Ascending aorta (tissue), 2 donors: ENCODE measurements at regions of chr1 and their contacts with region 1.

Region 1: GRCh38 chr1:42335050-42335808 is at the start of gene FOXJ3:
- DNase-seq: peak; percentile 43 to 93
- H3K4me3 ChIP-seq: peak within 1 kb of the TSS; percentile 95 to 99
- H3K27ac ChIP-seq: peak within 1 kb of the TSS; percentile 88 to 91
- H3K4me1 ChIP-seq: peaks cover 0 to 11% of the 10 kb centered on the region in 2 donors
- H3K27me3 ChIP-seq: no peaks in the 10 kb centered on the region
- CTCF ChIP-seq: no peak
- total RNA-seq, gene FOXJ3: 62.8 TPM

Region 2: DNA sequence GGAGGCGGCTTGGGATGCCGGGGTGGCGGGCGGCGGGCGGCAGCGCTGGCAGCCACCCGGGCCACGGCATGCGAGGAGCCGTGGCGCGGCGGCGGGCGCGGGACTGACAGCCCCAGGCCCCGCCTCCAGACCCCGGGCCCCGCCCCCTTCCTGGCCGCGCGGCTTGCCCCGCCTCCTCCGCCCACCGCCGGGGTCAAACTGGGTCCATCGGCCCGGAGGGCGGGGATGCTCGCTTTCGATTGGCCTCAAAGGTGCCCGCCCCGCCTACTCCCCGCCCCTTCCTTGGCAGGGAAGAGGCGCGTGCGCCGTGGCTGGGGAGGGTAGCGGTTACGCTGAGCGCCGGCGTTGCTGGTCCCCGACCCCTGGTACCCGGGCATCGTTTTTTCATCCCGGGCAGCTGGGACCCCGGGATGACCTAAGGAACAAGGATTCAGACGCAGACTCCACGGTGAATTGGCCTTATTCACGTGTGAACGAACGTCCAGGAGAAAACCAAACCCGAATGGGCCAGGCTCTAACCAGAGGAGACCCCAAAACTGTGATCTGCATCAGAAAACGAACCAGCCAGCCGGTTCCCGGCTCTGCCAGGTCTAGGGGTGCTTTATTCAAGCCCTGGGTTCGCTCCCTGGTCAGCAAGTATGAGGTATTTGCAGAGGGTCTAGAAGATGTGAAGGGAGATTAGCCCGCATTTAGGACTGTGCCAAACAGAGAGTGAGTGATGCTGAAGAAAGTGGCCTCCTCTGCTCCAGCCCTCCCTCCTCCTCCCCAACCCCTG is 299.2 kb before region 1 on chr1:
- intact Hi-C with region 1: loop called (anchors 2 kb)
- DNase-seq: peak; percentile 81 to 98
- H3K4me3 ChIP-seq: peak overlapping the region; percentile 91 to 99
- H3K27ac ChIP-seq: peak overlapping the region; percentile 31 to 84
- H3K4me1 ChIP-seq: peaks cover 6 to 7% of the 10 kb centered on the region in 2 donors
- H3K27me3 ChIP-seq: no peaks in the 10 kb centered on the region
- CTCF ChIP-seq: no peak

Region 3: GRCh38 chr1:42456010-42456758 is 121.0 kb after region 1 on chr1 and contains the starts of genes PPCS and ZMYND12:
- intact Hi-C with region 1: loop called (anchors 1 kb)
- DNase-seq: peak; percentile 59 to 92
- H3K4me3 ChIP-seq: peak within 1 kb of the TSS; percentile 81 to 89
- H3K27ac ChIP-seq: peak within 1 kb of the TSS; percentile 84 to 88
- H3K4me1 ChIP-seq: peaks cover 0 to 12% of the 10 kb centered on the region in 2 donors
- H3K27me3 ChIP-seq: no peaks in the 10 kb centered on the region
- CTCF ChIP-seq: peak in 1 of 3 experiments; percentile 14
- total RNA-seq, gene PPCS: 13.6 TPM
- total RNA-seq, gene ZMYND12: not detected

Region 4: DNA sequence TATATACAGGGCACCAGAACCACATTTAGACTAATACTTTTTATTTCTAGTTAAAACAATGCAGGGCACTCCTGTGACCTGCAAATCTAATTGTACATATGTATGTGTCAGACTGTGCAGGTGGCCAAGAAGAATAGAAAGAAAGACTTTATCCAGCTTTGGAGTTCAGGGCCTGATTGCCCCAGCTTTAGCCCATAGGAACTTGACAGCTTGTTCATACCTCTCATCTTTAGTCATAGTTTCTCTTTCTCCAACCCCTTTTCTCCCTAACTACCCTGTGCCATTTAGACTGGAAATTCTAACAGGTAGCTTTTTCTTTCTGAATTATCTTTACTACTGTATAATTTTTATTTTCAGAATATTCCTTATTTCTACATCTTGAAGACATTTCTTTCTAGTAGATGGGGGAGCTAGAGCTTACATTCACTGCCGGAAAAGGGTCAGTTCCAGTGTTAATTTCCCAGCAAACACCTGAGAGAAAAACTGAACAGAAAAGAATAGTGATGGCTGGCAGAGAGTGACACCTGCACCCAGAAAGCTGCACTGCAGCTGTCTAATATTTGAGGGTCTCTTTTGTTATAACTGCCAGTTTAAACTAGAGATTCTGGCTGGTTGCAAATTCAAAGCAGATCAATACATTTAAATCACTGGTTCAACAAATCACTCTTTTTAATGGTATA is 355.4 kb after region 1 on chr1:
- intact Hi-C with region 1: no loop called
- DNase-seq: no peak
- H3K4me3 ChIP-seq: no peak overlapping the region
- H3K27ac ChIP-seq: no peak overlapping the region
- H3K4me1 ChIP-seq: peaks cover 0 to 28% of the 10 kb centered on the region in 2 donors
- H3K27me3 ChIP-seq: no peaks in the 10 kb centered on the region
- CTCF ChIP-seq: no peak

Region 5: GRCh38 chr1:42924082-42924850 is 589.0 kb after region 1 on chr1:
- intact Hi-C with region 1: loop called (anchors 10 kb)
- DNase-seq: peak; percentile 85 to 97
- H3K4me3 ChIP-seq: peak overlapping the region; percentile 81 to 89
- H3K27ac ChIP-seq: peak overlapping the region; percentile 97 to 98
- H3K4me1 ChIP-seq: peaks cover 3 to 9% of the 10 kb centered on the region in 2 donors
- H3K27me3 ChIP-seq: no peaks in the 10 kb centered on the region
- CTCF ChIP-seq: no peak